ENCODE measurements at regions of chr12 and their contacts with region 1.

Region 1: DNA sequence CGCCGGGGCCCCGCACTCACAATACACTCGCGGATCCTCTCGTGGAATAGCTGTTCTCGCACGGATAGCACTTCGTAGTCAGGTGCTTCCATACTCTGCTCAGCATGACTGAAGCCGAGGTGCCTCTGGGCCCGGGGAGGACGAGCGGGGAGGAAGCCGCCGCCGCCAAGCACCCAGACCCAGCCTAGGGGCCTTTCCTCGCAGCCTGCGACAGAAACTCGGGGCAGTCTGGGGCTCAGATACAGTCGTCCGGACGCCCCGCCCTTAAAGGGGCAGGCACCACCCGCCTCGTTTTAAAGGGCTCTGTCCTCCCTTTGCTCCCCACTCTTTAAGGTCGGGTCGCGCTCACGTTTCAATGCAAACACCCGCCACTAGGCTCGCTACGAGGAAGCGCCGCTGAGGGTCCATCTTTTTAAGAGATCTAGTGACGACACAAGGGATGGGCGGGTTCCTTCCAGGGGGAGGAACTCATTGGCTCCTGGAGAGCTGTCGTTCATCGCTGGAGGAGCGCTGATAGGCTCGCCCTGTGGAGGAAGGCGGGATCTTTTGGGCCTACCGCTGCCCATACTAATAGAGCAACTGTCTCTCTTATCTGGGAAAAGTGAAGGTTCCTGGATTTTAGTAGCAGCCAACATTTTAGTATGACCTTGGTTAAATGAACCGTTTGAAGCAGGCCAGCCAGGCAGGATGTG is at the start of gene LMBR1L:
- DNase-seq: peak; percentile 97
- H3K4me3 Mint-ChIP-seq: peak within 1 kb of the TSS; percentile 88
- H3K27ac Mint-ChIP-seq: peak within 1 kb of the TSS; percentile 82
- H3K4me1 Mint-ChIP-seq: peaks cover 31% of the 10 kb centered on the region
- H3K27me3 Mint-ChIP-seq: peaks cover 2% of the 10 kb centered on the region
- total RNA-seq, gene LMBR1L: 82.8 to 85.3 TPM

Region 2: GRCh38 chr12:48828293-48828692 is 282.3 kb before region 1 on chr12:
- CTCF ChIA-PET with region 1: no interaction called
- POLR2A ChIA-PET with region 1: no interaction called
- DNase-seq: no peak
- H3K4me3 Mint-ChIP-seq: no peak overlapping the region
- H3K27ac Mint-ChIP-seq: no peak overlapping the region
- H3K4me1 Mint-ChIP-seq: peaks cover 20% of the 10 kb centered on the region
- H3K27me3 Mint-ChIP-seq: no peaks in the 10 kb centered on the region

Region 3: GRCh38 chr12:49060237-49061156 is 50.1 kb before region 1 on chr12 and contains the start of gene KMT2D:
- CTCF ChIA-PET with region 1: interaction called, 26 read pairs
- POLR2A ChIA-PET with region 1: interaction called, 5 read pairs
- DNase-seq: peak; percentile 88
- H3K4me3 Mint-ChIP-seq: peak within 1 kb of the TSS; percentile 95
- H3K27ac Mint-ChIP-seq: peak within 1 kb of the TSS; percentile 91
- H3K4me1 Mint-ChIP-seq: peaks cover 50% of the 10 kb centered on the region
- H3K27me3 Mint-ChIP-seq: no peaks in the 10 kb centered on the region
- total RNA-seq, gene KMT2D: 82.3 to 87.8 TPM

Measured in activated CD4-positive, alpha-beta memory T cell treated with anti-CD3 and anti-CD28 coated beads, Interleukin-2, amount 10 ng/mL, durations not matched to agents 7 days and 5 days (primary cell).